Sciatic nerve (tissue), 2 donors: ENCODE measurements at regions of chr2 and their contacts with region 1.

Region 1: DNA sequence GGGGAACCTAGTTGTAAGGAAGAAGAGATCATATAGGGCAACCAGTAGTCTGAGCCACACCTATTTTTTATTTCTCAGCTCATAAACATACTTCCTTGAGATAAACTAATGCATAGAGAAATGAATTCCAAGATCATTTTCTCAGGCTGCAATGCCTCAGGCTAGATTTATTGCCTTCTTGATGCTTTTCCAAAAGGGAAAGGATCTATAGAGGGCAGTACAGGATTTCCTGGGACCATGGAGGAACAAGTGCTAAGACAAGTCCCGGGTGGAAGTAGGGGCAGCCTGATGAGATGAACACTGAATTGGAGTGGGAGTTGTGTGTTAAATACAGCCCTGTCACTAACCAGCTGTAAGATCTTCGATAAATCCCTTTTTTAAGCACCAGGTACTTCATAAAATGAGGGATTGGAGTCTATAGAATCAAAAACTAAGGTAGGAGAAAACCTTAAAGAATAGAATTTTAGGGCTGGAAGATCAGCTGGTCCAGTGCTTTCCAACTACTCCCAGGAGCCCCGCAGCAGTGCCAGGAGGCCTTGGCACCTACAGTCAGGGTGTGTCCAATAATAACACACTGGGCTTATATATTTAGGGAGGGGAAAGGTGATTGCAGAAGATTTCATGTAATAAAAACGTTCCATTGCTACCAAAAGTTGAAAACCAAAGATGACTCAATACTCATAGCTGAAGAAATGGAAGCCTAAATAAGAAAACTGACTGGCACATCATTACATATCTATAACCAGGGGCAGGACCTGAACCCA is 58.1 kb downstream of the SERTAD2 start:
- DNase-seq: no peak
- ATAC-seq: peak; percentile 50

Region 2: DNA sequence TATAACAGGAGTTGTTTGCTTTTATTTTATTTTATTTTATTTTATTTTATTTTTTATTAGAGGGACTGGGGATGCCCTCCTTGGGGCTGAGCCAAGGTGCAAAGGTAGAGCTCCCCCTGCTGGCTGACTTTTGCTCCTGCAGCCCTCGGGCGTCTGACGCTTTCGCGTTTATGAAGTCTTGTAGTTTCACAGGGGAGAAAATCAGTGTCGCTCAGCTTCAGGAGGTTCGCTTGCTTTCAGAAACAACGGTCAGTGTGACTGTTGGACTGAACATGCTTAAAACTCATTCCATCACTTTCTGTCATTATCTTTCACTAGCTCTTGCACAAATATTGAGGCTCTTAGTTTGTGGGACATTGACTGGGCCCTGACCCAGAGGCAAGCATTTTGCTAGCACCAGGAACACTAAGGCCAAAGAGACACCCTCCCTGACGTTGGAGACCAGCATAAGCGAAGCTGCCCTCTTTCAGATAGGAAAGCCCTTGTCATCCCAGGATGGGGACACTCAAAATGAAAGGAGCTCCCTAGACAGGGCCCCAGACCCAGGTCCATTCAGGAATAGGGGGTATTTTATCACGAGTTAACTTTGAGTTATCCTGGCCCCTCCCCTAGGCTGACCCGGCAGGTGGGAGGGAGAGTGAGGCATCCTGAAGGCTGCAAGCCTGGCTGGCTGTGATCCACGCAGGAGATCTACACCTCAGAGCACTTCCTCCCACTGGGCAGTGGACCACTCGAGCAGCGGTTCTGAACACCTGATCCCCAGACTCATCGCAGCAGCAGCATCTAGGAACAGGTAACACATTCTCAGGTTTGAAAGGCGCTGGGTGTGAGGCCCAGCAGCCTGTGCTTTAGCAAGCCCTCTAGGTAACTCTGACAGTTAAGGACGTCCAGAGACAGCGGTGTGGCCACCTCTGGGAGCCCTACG is 107.3 kb before region 1 on chr2:
- intact Hi-C with region 1: no loop called
- DNase-seq: peak; percentile 90
- ATAC-seq: peak; percentile 76

Region 3: GRCh38 chr2:64617631-64618151 is 22.1 kb after region 1 on chr2:
- intact Hi-C with region 1: loop called (anchors 1 kb)
- DNase-seq: peak; percentile 62
- ATAC-seq: no peak

Region 4: GRCh38 chr2:64873472-64873924 is 277.9 kb after region 1 on chr2:
- intact Hi-C with region 1: loop called (anchors 5 kb)
- DNase-seq: peak; percentile 88
- ATAC-seq: peak; percentile 89